Psoas muscle (tissue), 8 donors: ENCODE measurements at regions of chr11 and their contacts with region 1.

Region 1: GRCh38 chr11:94973099-94973968 is at the starts of genes CWC15 and KDM4D:
- DNase-seq: peak; percentile 94 to 97
- ATAC-seq: peak; percentile 100
- H3K4me3 ChIP-seq: peak within 1 kb of the TSS; percentile 95
- H3K27ac ChIP-seq: peak within 1 kb of the TSS; percentile 86
- H3K4me1 ChIP-seq: peaks cover 13% of the 10 kb centered on the region
- H3K27me3 ChIP-seq: no peaks in the 10 kb centered on the region
- CTCF ChIP-seq: no peak
- total RNA-seq, gene CWC15: 81.4 to 91.6 (median 83.3) TPM
- total RNA-seq, gene KDM4D: 0.30 to 0.82 (median 0.53) TPM

Region 2: GRCh38 chr11:93791493-93791892 is 1181.8 kb before region 1 on chr11:
- intact Hi-C with region 1: loop called in 1 of 2 experiments (anchors 10 kb)
- DNase-seq: no peak
- ATAC-seq: no peak
- H3K4me3 ChIP-seq: no peak overlapping the region
- H3K27ac ChIP-seq: no peak overlapping the region
- H3K4me1 ChIP-seq: peaks cover 14% of the 10 kb centered on the region
- H3K27me3 ChIP-seq: no peaks in the 10 kb centered on the region
- CTCF ChIP-seq: no peak

Region 3: DNA sequence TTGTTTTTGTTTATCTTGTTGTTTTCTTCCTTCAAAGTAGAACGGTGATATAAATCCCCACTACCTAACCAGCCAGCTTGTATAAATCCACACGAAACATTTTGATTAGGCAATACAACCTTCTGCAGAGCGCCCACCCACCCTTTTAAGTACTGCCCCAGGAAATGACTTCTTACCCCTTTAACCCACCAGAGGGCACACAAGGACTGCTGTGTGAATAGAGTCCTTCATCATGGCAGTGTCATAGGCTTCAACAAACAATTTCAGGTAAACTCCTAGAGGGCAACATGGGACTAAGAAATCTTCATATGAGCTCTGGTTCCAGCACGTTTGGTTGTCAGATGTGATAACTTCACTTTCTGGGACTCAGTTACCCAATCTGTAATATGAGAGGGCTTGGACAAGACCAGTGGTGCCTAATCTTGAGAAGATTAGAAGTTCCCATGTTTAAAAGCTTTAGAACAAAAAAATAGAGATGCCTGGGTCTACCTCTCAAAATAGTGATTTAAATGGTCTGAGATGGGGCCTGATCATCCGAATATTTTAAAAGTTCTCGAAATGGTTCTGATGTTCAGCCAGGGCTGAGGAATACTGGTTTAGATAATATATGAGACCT is 350.1 kb before region 1 on chr11:
- intact Hi-C with region 1: loop called in 1 of 2 experiments (anchors 2 kb)
- DNase-seq: no peak
- ATAC-seq: peak; percentile 96 to 98 (median 98)
- H3K4me3 ChIP-seq: no peak overlapping the region
- H3K27ac ChIP-seq: no peak overlapping the region
- H3K4me1 ChIP-seq: no peaks in the 10 kb centered on the region
- H3K27me3 ChIP-seq: no peaks in the 10 kb centered on the region
- CTCF ChIP-seq: peak; percentile 88

Region 4: DNA sequence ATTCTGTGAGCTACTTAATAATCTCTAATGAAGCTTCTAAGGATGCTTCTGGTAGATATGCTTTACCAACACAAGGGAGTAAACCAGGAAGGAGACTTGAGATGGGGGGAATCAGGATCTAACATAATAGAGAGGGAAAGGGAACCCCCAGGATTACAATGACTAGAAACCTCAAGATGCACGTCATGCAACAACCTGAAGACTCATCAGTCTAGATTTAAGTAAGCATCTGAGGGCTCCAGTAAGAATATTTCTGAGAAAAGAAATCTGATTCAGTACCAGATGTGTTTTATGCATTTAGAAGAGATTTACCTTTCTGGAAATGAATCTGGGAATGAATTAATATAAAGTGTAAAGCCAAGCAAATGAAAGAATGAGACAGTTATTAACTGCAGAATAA is 15.4 kb after region 1 on chr11:
- intact Hi-C with region 1: loop called in 1 of 2 experiments (anchors 1 kb)
- DNase-seq: no peak
- ATAC-seq: no peak
- H3K4me3 ChIP-seq: no peak overlapping the region
- H3K27ac ChIP-seq: no peak overlapping the region
- H3K4me1 ChIP-seq: no peaks in the 10 kb centered on the region
- H3K27me3 ChIP-seq: no peaks in the 10 kb centered on the region
- CTCF ChIP-seq: no peak

Region 5: DNA sequence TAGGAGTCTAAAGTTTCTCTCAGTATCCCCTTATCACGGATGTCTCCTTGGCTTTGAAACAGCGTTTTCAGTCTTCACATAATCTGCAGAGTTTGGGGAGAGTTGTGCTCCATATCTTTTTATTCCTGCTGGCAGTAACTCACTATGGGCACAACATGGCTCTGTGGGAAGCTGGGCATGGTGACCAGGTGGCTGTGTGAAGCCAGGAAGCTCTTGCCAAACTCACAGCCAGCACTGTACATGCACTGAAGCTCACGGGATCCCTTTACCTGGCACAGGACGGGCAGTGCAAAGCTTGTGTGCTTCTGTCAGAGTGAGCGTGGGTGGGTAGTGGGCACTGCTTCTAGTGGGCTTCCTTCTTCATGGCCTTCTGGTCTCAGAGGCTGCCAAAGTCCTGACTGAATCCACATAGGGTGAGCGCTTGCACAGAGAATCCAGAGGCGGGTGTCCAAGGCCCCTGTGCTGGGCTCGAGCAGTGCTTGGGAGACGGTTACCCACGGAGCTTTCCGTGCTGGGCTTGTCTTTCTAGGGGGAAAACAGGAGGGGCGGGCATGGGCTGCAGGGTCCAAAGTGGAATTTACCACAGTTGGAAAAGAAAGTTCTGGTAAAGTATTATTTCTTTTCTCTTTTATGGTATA is 41.0 kb after region 1 on chr11:
- intact Hi-C with region 1: no loop called
- DNase-seq: no peak
- ATAC-seq: no peak
- H3K4me3 ChIP-seq: no peak overlapping the region
- H3K27ac ChIP-seq: no peak overlapping the region
- H3K4me1 ChIP-seq: no peaks in the 10 kb centered on the region
- H3K27me3 ChIP-seq: peaks cover 0 to 4% (median 0%) of the 10 kb centered on the region in 3 donors
- CTCF ChIP-seq: no peak

Region 6: DNA sequence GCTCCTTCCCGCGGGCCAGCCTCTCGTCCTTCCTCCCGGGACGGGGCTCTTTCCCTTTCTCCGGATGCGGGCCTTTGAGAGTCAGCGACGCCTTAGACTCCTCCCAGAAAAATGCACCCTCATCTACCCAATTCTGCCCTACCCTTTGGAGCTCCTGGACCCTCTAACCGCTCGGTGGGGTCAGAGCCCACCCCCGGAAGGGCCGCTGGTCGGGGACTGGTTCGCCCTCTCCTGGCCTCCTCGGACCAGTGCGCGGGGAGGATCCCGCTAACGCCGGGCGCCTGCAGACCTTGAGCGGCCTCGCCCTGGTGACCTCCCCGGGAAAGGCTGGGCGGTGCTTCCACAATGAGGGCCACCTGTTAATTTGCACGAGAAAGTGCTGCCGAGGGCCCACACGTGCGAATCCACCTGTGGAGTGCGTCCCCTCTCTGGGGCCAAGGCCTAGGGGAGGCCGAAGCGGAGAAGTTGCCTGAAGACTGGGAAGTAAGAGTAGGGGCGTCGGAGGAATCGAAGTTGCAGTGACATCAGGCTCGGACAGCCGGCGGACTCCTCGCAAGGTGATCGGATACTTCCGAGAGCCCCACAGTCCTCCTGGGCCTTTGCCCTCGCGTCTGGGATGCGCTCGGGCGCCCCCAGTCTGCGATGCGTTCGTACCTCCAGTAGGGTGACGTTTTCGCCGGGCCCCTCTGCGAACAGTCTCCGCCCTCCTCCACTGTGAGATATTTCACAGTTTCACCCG is 177.8 kb after region 1 on chr11:
- intact Hi-C with region 1: loop called in 1 of 2 experiments (anchors 10 kb)
- DNase-seq: peak; percentile 87 to 92
- ATAC-seq: peak; percentile 84 to 89 (median 88)
- H3K4me3 ChIP-seq: peak overlapping the region; percentile 74
- H3K27ac ChIP-seq: peak overlapping the region; percentile 83
- H3K4me1 ChIP-seq: peaks cover 30% of the 10 kb centered on the region
- H3K27me3 ChIP-seq: no peaks in the 10 kb centered on the region
- CTCF ChIP-seq: peak; percentile 82